CD8-positive, alpha-beta T cell (primary cell): ENCODE measurements at regions of chr18 and their contacts with region 1.

Region 1: GRCh38 chr18:42568773-42569172 is 546.7 kb downstream of the RIT2 start:
- DNase-seq: no peak
- ATAC-seq: no peak
- H3K4me3 ChIP-seq: no peak overlapping the region
- H3K4me3 Mint-ChIP-seq: no peak overlapping the region
- H3K27ac ChIP-seq: no peak overlapping the region
- H3K27ac Mint-ChIP-seq: no peak overlapping the region
- H3K4me1 ChIP-seq: no peaks in the 10 kb centered on the region
- H3K4me1 Mint-ChIP-seq: no peaks in the 10 kb centered on the region
- H3K27me3 ChIP-seq: no peaks in the 10 kb centered on the region
- H3K27me3 Mint-ChIP-seq: no peaks in the 10 kb centered on the region
- CTCF ChIP-seq: no peak

Region 2: DNA sequence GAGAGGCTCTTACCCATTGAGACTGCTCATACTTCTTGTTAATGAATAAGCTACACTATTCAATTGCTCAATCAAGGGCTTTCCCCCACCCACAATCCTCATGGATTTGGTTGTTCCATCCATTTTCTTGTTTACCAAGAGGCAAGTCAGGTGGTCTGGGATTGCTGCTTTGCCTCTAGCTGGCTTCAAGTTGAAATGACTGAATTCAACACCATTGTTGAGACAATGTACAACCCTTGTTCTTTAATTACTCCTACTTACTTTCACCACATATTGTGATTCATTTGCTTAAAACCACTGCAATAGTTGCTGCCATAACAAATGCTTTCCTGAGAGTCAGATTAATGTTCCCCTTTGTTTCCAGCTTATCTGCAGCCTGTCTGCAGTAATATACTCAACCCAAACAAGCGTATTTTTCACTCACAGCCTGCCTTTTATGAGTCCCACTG is 14.5 kb after region 1 on chr18:
- CTCF ChIA-PET with region 1: no interaction called
- POLR2A ChIA-PET with region 1: no interaction called
- intact Hi-C with region 1: loop called in 1 of 2 experiments (anchors 1 kb)
- DNase-seq: no peak
- ATAC-seq: no peak
- H3K4me3 ChIP-seq: no peak overlapping the region
- H3K4me3 Mint-ChIP-seq: no peak overlapping the region
- H3K27ac ChIP-seq: no peak overlapping the region
- H3K27ac Mint-ChIP-seq: no peak overlapping the region
- H3K4me1 ChIP-seq: no peaks in the 10 kb centered on the region
- H3K4me1 Mint-ChIP-seq: no peaks in the 10 kb centered on the region
- H3K27me3 ChIP-seq: no peaks in the 10 kb centered on the region
- H3K27me3 Mint-ChIP-seq: no peaks in the 10 kb centered on the region
- CTCF ChIP-seq: no peak